ENCODE measurements at regions of chr14 and their contacts with region 1.

Region 1: GRCh38 chr14:22986508-22987054 is 4.2 kb upstream of the AJUBA start:
- DNase-seq: peak; percentile 65 to 87 (median 82)
- ATAC-seq: peak; percentile 79
- H3K4me3 ChIP-seq: no peak overlapping the region
- H3K4me3 Mint-ChIP-seq: no peak overlapping the region
- H3K27ac ChIP-seq: no peak overlapping the region
- H3K27ac Mint-ChIP-seq: peak overlapping the region in 4 of 9 donors; percentile 2 to 39 (median 24)
- H3K4me1 ChIP-seq: peaks cover 0 to 8% of the 10 kb centered on the region in 2 donors
- H3K4me1 Mint-ChIP-seq: peaks cover 0 to 5% (median 0%) of the 10 kb centered on the region in 7 donors
- H3K27me3 ChIP-seq: no peaks in the 10 kb centered on the region
- H3K27me3 Mint-ChIP-seq: no peaks in the 10 kb centered on the region

Region 2: DNA sequence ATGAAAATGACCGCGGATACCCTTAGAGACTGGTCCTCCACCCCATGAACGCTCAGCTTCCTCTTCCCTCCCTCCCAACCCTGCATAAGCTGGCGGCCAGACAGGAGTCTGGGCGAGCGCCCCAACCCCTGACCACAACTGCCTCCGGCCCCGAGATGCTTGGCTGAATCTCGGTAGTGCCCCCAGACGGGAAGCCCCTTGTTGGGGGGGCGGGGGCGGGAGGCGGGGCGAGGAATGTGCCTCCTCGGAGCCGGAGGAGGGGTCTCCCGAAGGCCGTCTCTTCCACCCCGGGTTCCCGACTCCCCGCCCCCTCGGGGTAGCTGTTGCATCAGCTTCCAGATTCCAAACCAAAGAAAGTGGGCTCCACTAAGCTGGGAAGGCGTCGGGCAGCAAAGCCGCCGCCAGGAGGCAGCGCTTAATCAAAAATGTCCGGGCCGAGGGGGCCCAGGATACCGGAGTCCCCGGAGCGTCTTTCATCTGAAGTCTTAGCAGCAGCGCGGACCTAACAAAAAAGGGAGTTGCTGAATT is 163.9 kb before region 1 on chr14:
- CTCF ChIA-PET with region 1: interaction called, 13 read pairs
- POLR2A ChIA-PET with region 1: no interaction called
- intact Hi-C with region 1: loop called (anchors 1 kb)
- DNase-seq: peak; percentile 50 to 71 (median 65)
- ATAC-seq: peak; percentile 83
- H3K4me3 ChIP-seq: peak overlapping the region; percentile 38
- H3K4me3 Mint-ChIP-seq: peak overlapping the region; percentile 47 to 78 (median 66)
- H3K27ac ChIP-seq: no peak overlapping the region
- H3K27ac Mint-ChIP-seq: peak overlapping the region in 3 of 9 donors; percentile 11 to 36 (median 22)
- H3K4me1 ChIP-seq: peaks cover 0 to 17% of the 10 kb centered on the region in 2 donors
- H3K4me1 Mint-ChIP-seq: peaks cover 6 to 37% (median 24%) of the 10 kb centered on the region in 7 donors
- H3K27me3 ChIP-seq: no peaks in the 10 kb centered on the region
- H3K27me3 Mint-ChIP-seq: peaks cover 0 to 16% (median 4%) of the 10 kb centered on the region in 5 donors

Region 3: GRCh38 chr14:22929104-22929847 is 57.3 kb before region 1 on chr14 and contains the start of gene PRMT5:
- CTCF ChIA-PET with region 1: interaction called, 19 read pairs
- POLR2A ChIA-PET with region 1: interaction called, 3 read pairs
- intact Hi-C with region 1: loop called (anchors 1 kb)
- DNase-seq: peak; percentile 81 to 100 (median 99)
- ATAC-seq: peak; percentile 97
- H3K4me3 ChIP-seq: peak within 1 kb of the TSS; percentile 91
- H3K4me3 Mint-ChIP-seq: no peak within 1 kb of the TSS
- H3K27ac ChIP-seq: peak within 1 kb of the TSS; percentile 91
- H3K27ac Mint-ChIP-seq: no peak within 1 kb of the TSS
- H3K4me1 ChIP-seq: peaks cover 9 to 17% of the 10 kb centered on the region in 2 donors
- H3K4me1 Mint-ChIP-seq: peaks cover 5 to 36% (median 20%) of the 10 kb centered on the region in 7 donors
- H3K27me3 ChIP-seq: no peaks in the 10 kb centered on the region
- H3K27me3 Mint-ChIP-seq: no peaks in the 10 kb centered on the region
- total RNA-seq, gene PRMT5: 24.9 to 82.8 (median 34.2) TPM

Region 4: GRCh38 chr14:22955702-22956569 is 30.6 kb before region 1 on chr14:
- CTCF ChIA-PET with region 1: interaction called, 10 read pairs
- POLR2A ChIA-PET with region 1: no interaction called
- intact Hi-C with region 1: loop called in 1 of 2 experiments (anchors 1 kb)
- DNase-seq: no peak
- ATAC-seq: no peak
- H3K4me3 ChIP-seq: peak overlapping the region; percentile 64
- H3K4me3 Mint-ChIP-seq: peak overlapping the region; percentile 87 to 95 (median 93)
- H3K27ac ChIP-seq: peak overlapping the region; percentile 85
- H3K27ac Mint-ChIP-seq: peak overlapping the region; percentile 88 to 96 (median 92)
- H3K4me1 ChIP-seq: peaks cover 0 to 6% of the 10 kb centered on the region in 2 donors
- H3K4me1 Mint-ChIP-seq: peaks cover 0 to 31% (median 19%) of the 10 kb centered on the region in 7 donors
- H3K27me3 ChIP-seq: no peaks in the 10 kb centered on the region
- H3K27me3 Mint-ChIP-seq: peaks cover 0 to 4% (median 0%) of the 10 kb centered on the region in 5 donors

Region 5: DNA sequence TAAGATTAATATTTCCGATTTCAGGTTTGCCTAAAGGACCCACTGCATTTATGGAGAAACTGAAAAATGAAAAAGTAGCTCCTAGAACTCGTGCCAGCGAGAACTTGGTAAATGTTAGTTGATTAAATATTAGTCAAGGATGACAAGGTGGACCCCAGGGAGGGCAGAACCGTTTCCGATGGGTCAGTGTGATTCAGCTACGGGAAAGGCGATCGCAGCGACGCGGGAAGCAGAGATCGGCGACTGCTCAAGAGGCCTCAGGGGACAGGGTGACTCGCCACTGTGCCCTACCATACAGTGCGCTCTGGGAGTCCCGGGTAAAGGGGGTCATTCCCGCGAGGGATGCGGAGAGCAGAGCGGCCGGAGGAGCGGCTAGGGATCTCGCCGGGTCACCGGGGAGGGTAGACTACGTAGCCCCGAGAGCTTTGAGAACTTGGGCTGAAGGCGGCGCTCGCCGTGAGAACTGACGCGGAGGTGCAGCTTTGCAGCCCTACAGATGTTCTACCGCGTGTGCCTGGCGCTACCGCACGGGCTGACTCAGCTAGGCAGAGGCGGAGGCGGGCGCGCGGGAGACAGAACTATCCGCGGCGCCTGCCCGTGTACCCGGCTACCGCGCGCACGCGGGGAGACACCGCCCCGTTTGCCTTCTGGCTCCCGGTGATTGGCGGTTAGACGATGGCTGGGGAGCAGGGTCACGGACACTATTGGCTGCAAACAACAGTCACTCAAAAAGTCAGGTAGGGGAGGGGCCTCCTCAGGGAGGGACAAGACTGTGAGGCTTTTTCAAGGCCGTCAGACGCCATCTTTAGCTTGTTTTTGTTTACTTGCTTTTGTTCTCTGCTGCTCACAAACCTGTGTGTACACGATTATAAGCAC is 20.2 kb after region 1 on chr14:
- CTCF ChIA-PET with region 1: interaction called, 33 read pairs
- POLR2A ChIA-PET with region 1: interaction called, 11 read pairs
- intact Hi-C with region 1: loop called (anchors 1 kb)
- DNase-seq: peak; percentile 88 to 99 (median 98)
- ATAC-seq: peak; percentile 97
- H3K4me3 ChIP-seq: peak overlapping the region; percentile 94
- H3K4me3 Mint-ChIP-seq: peak overlapping the region; percentile 91 to 100 (median 96)
- H3K27ac ChIP-seq: peak overlapping the region; percentile 86
- H3K27ac Mint-ChIP-seq: peak overlapping the region; percentile 87 to 99 (median 98)
- H3K4me1 ChIP-seq: peaks cover 9 to 25% of the 10 kb centered on the region in 2 donors
- H3K4me1 Mint-ChIP-seq: peaks cover 12 to 60% (median 48%) of the 10 kb centered on the region in 7 donors
- H3K27me3 ChIP-seq: no peaks in the 10 kb centered on the region
- H3K27me3 Mint-ChIP-seq: no peaks in the 10 kb centered on the region

Region 6: GRCh38 chr14:23057757-23058653 is 71.4 kb after region 1 on chr14:
- CTCF ChIA-PET with region 1: interaction called, 264 read pairs
- POLR2A ChIA-PET with region 1: interaction called, 76 read pairs
- intact Hi-C with region 1: loop called (anchors 1 kb)
- DNase-seq: peak; percentile 71 to 89 (median 83)
- ATAC-seq: peak; percentile 81
- H3K4me3 ChIP-seq: peak overlapping the region; percentile 67
- H3K4me3 Mint-ChIP-seq: peak overlapping the region; percentile 78 to 91 (median 87)
- H3K27ac ChIP-seq: peak overlapping the region; percentile 49
- H3K27ac Mint-ChIP-seq: peak overlapping the region in 7 of 9 donors; percentile 23 to 85 (median 58)
- H3K4me1 ChIP-seq: peaks cover 7 to 9% of the 10 kb centered on the region in 2 donors
- H3K4me1 Mint-ChIP-seq: peaks cover 13 to 20% (median 17%) of the 10 kb centered on the region in 7 donors
- H3K27me3 ChIP-seq: no peaks in the 10 kb centered on the region
- H3K27me3 Mint-ChIP-seq: peaks cover 0 to 8% (median 0%) of the 10 kb centered on the region in 5 donors

Region 7: GRCh38 chr14:23186913-23187654 is 200.5 kb after region 1 on chr14:
- CTCF ChIA-PET with region 1: interaction called, 5 read pairs
- POLR2A ChIA-PET with region 1: no interaction called
- intact Hi-C with region 1: loop called (anchors 5 to 10 kb)
- DNase-seq: peak in 7 of 9 donors; percentile 25 to 55 (median 36)
- ATAC-seq: peak; percentile 73
- H3K4me3 ChIP-seq: no peak overlapping the region
- H3K4me3 Mint-ChIP-seq: no peak overlapping the region
- H3K27ac ChIP-seq: no peak overlapping the region
- H3K27ac Mint-ChIP-seq: peak overlapping the region in 3 of 9 donors; percentile 12 to 65 (median 26)
- H3K4me1 ChIP-seq: peaks cover 3 to 4% of the 10 kb centered on the region in 2 donors
- H3K4me1 Mint-ChIP-seq: peaks cover 0 to 11% (median 2%) of the 10 kb centered on the region in 7 donors
- H3K27me3 ChIP-seq: no peaks in the 10 kb centered on the region
- H3K27me3 Mint-ChIP-seq: peaks cover 0 to 19% (median 0%) of the 10 kb centered on the region in 5 donors

Region 8: DNA sequence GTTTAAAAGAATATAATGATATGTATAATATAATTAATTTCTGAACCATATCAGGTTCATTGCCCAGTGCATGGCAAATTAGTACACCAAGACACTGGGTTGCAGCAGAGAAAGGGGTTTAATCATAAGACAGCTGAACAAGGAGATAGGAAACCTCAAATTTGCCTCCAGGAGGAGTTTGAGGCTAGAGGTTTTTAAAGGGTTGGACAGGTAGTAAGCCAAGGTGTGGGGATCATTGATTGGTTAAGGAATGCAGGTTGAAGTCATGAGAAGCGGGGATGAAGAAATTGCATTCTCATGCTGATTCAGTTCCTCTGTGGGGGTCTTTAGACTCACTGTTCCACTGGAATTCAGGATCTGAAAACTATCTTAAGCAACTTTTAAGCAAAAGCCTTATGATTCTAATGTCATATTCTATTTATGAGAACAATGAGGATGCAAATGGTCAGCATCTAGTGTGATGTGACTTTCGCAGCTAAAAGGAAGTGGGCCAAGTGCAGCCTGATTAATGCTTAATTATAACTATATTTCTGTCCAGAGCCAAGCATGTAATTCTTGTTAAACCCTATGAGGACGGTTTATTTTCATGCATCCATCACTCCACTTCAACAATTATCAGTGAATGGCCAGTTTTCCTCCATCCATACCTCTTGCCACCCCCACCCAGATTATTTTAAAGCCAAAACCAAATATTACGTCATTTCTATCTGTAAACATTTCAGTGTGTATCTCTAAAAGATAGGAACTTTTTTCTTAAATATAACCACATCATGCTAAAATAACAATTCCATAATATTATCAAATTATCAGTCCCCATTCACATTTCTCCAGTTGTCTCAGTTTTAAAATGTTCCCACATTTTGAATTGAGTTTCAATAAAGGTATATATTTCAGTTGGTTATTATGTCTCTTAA is 266.1 kb after region 1 on chr14:
- CTCF ChIA-PET with region 1: no interaction called
- POLR2A ChIA-PET with region 1: no interaction called
- intact Hi-C with region 1: no loop called
- DNase-seq: no peak
- ATAC-seq: no peak
- H3K4me3 ChIP-seq: no peak overlapping the region
- H3K4me3 Mint-ChIP-seq: no peak overlapping the region
- H3K27ac ChIP-seq: no peak overlapping the region
- H3K27ac Mint-ChIP-seq: no peak overlapping the region
- H3K4me1 ChIP-seq: no peaks in the 10 kb centered on the region
- H3K4me1 Mint-ChIP-seq: no peaks in the 10 kb centered on the region
- H3K27me3 ChIP-seq: no peaks in the 10 kb centered on the region
- H3K27me3 Mint-ChIP-seq: peaks cover 24 to 29% (median 26%) of the 10 kb centered on the region in 5 donors